Activated CD4-positive, alpha-beta T cell treated with anti-CD3 and anti-CD28 coated beads for 36 hours (primary cell): ENCODE measurements at regions of chr14 and their contacts with region 1.

Region 1: DNA sequence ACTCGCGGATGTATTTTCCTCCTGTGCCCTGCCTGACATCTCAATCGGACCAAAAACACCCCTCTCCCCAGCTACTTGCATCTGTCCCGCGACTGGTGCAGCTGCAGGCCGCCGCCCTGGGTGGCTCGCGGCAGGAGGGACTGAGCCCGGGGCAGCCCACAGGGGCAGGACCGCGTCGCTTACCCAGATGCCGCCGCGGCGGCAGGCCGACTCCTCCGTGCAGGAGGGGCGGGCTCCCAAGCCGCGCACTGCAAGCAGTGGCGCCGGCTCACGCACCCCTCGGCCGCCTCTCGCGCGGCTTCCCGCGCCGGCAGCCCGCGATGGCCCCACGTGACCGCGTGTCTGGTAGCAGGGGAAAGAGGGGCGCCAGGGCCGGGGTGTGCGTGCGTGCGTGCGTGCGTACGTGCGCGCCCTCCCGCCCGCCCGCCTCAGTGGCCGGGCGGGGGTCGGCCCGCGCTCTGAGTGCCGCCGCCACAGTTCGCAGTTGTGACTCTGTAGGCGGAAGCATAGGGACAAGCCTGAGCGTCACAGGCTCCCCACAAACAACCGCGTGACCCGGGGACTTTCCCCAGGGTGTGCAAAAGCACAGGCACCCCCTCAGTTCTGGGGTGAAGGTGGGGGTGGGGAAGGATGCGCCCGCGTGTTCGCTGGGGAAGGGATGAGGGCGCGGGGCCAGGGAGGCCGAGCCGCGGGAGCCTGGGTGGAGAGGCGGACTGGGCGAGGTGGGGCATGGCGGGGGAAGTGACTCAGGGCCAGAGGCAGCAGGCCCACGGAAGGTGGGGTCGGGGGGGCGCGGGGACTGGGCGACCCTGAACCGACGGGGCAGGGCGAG is at the start of gene ZBTB25:
- DNase-seq: peak; percentile 97
- ATAC-seq: peak; percentile 66
- H3K4me3 Mint-ChIP-seq: peak within 1 kb of the TSS; percentile 98
- H3K27ac Mint-ChIP-seq: peak within 1 kb of the TSS; percentile 99
- H3K4me1 Mint-ChIP-seq: peaks cover 51% of the 10 kb centered on the region
- H3K27me3 Mint-ChIP-seq: no peaks in the 10 kb centered on the region
- total RNA-seq, gene ZBTB25: 32.7 to 40.0 TPM

Region 2: DNA sequence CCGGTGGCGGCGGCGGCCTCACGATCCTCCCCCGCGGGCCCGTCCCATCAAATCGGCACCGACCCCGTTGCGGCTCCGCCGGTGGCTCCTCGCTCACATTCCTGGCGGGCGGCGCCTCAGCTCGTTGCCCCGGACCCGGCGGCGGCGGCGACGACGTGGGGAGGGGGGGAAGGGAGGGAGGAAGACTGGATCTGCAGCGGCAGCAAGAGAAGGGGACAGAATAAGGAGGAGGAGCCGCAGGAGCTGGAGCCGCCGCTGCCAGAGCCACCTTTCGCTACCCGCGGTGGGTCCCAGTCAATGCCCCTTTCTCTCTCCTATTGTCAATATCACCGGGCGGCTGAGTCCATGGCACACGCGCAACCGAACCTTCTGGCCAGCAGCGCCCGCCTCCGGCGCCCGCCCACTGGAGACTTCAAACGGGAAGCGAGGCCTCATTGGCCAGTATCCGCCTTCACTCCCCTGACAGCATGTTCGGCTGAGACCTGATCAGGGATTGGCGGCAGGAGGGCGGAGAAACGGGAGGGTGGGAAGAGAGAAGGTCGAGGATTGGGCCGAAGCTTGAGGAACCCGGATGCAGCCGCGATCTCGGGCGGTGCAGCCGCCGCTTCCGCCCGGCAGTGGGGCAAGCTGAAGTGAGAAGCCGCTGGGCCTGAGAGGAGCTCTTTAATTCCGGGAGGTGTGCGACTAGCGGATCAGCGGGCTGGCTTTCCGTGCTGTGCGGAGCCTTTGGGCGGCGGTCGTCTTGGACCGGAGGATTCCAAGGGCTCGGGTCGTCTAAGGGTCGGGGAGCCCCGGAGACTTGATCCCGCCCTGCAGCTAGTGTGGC is 960.5 kb before region 1 on chr14 and contains the start of gene PPP2R5E:
- CTCF ChIA-PET with region 1: no interaction called
- POLR2A ChIA-PET with region 1: no interaction called
- intact Hi-C with region 1: loop called in 1 of 2 experiments (anchors 10 kb)
- DNase-seq: peak; percentile 98
- ATAC-seq: peak; percentile 99
- H3K4me3 Mint-ChIP-seq: peak within 1 kb of the TSS; percentile 86
- H3K27ac Mint-ChIP-seq: peak within 1 kb of the TSS; percentile 85
- H3K4me1 Mint-ChIP-seq: peaks cover 26% of the 10 kb centered on the region
- H3K27me3 Mint-ChIP-seq: no peaks in the 10 kb centered on the region
- total RNA-seq, gene PPP2R5E: 38.4 to 40.4 TPM

Region 3: DNA sequence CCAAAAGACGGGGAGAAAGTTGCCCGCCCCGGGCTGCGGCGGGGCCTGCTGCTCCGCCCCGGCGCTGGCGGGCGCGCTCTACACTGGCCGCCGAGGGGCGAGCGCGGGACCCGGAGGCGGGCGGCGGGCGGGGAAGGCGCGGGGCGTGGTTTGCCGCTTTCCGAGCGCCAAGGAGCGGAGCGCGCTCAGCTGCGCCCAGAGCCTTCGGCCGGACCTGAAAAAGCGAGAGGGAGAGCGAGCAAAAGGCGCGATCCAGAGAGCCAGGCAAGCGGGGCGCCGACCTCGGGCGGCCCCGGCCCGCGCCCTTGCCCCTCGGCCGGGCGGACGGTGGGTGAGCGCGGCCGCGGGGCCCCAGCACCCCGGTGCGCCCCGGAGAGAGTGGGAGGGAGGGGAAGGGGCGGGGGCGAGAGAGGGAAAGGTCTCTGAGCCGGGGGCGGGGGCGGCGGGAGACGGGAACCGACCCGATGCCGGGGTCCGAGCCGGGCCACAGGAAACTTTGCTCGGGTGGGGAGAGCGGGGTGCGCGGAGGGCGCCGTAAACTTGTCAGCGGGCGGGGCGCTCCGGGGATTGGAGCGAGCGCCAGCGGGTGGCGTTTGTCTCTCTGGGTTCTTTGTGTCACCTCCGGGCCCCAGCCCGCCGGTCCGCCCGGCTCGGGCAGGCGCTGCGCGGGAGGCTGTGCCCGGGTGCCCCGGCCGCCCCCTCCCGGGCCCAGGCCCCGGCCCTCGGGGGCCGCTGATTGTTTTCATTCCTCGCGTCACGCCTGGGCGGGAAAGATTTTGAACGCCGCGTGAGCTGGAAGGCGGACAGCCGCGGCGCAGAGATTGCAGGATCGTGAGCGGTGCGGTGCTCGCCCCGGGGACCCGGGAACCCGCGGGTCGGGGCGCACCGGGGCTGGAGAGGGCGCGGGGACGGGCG is 650.6 kb before region 1 on chr14 and contains the start of gene SYNE2:
- CTCF ChIA-PET with region 1: no interaction called
- POLR2A ChIA-PET with region 1: no interaction called
- intact Hi-C with region 1: loop called in 1 of 2 experiments (anchors 5 kb)
- DNase-seq: peak; percentile 89
- ATAC-seq: peak; percentile 86
- H3K4me3 Mint-ChIP-seq: peak within 1 kb of the TSS; percentile 95
- H3K27ac Mint-ChIP-seq: peak within 1 kb of the TSS; percentile 85
- H3K4me1 Mint-ChIP-seq: peaks cover 35% of the 10 kb centered on the region
- H3K27me3 Mint-ChIP-seq: no peaks in the 10 kb centered on the region
- total RNA-seq, gene SYNE2: 18.4 to 21.8 TPM

Region 4: GRCh38 chr14:64387694-64388532 is 115.8 kb before region 1 on chr14 and contains the start of gene MTHFD1:
- CTCF ChIA-PET with region 1: no interaction called
- POLR2A ChIA-PET with region 1: interaction called, 5 read pairs
- intact Hi-C with region 1: loop called (anchors 1 kb)
- DNase-seq: peak; percentile 99
- ATAC-seq: peak; percentile 95
- H3K4me3 Mint-ChIP-seq: peak within 1 kb of the TSS; percentile 93
- H3K27ac Mint-ChIP-seq: peak within 1 kb of the TSS; percentile 93
- H3K4me1 Mint-ChIP-seq: peaks cover 34% of the 10 kb centered on the region
- H3K27me3 Mint-ChIP-seq: no peaks in the 10 kb centered on the region
- total RNA-seq, gene MTHFD1: 213 to 222 TPM

Region 5: DNA sequence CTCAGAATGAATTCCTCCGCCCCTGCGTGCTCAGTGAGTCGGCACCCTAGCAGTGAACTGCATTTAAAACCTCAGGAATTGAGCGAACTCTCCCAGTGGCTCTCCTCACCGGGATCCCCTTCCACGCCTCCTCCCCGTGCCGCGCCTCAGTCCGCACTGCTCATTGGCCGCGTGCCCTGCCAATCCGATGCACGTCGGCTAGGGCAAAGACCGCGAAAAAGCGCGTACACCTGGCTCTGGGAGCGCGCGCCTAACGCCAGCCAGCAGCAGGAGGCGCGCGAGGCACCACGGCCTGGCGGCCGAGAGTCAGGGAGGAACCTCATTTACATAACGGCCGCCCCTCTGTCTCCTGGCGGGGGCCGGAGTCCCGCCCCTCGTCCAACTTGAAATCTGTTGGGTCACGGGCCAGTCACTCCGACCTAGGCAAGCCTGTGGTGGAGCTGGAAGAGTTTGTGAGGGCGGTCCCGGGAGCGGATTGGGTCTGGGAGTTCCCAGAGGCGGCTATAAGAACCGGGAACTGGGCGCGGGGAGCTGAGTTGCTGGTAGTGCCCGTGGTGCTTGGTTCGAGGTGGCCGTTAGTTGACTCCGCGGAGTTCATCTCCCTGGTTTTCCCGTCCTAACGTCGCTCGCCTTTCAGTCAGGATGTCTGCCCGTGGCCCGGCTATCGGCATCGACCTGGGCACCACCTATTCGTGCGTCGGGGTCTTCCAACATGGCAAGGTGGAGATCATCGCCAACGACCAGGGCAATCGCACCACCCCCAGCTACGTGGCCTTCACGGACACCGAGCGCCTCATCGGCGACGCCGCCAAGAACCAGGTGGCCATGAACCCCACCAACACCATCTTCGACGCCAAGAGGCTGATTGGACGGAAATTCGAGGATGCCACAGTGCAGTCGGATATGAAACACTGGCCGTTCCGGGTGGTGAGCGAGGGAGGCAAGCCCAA is 36.8 kb after region 1 on chr14 and contains the start of gene HSPA2:
- CTCF ChIA-PET with region 1: interaction called, 8 read pairs
- POLR2A ChIA-PET with region 1: interaction called, 4 read pairs
- intact Hi-C with region 1: loop called (anchors 1 kb)
- DNase-seq: peak; percentile 97
- ATAC-seq: peak; percentile 95
- H3K4me3 Mint-ChIP-seq: peak within 1 kb of the TSS; percentile 81
- H3K27ac Mint-ChIP-seq: peak within 1 kb of the TSS; percentile 96
- H3K4me1 Mint-ChIP-seq: peaks cover 28% of the 10 kb centered on the region
- H3K27me3 Mint-ChIP-seq: peaks cover 39% of the 10 kb centered on the region
- total RNA-seq, gene HSPA2: 3.2 to 4.1 TPM

Region 6: GRCh38 chr14:64681796-64682710 is 178.4 kb after region 1 on chr14:
- CTCF ChIA-PET with region 1: no interaction called
- POLR2A ChIA-PET with region 1: no interaction called
- intact Hi-C with region 1: no loop called
- DNase-seq: no peak
- ATAC-seq: no peak
- H3K4me3 Mint-ChIP-seq: no peak overlapping the region
- H3K27ac Mint-ChIP-seq: no peak overlapping the region
- H3K4me1 Mint-ChIP-seq: no peaks in the 10 kb centered on the region
- H3K27me3 Mint-ChIP-seq: no peaks in the 10 kb centered on the region

Region 7: DNA sequence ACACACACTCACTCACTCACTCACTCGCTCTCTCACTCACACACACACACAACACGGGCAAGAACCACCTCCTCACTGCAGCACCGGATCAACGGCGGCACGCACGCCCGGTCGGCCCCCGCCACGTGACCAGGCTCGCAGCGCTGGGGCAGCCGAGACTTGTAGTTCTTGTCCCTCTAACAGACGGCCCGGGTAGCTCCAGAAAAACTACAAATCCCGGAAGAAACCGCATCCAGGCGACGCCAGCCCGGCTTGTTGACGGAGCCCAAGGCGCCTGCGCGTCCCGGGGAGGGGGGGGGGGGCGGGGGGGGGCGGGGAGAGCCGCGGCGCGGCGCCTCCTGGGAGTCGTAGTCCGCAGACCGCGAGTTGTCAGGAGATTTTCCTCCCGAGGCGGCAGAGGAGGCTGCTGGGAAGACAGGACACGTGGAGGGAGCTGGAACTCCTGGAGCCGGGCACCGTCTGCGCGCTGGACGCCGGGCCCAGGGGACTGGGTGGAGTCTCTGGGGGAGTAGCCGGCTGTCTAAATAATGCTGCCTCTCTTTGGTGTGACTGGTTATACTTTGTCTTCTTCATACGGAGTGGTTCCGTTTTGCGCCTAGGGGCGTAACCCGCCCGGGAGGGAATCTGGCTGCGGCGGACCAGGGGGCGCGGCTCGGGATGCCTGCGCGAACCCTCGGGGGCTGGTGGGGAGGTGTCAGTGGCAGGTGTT is 598.9 kb after region 1 on chr14 and contains the start of gene MAX:
- CTCF ChIA-PET with region 1: no interaction called
- POLR2A ChIA-PET with region 1: no interaction called
- intact Hi-C with region 1: loop called in 1 of 2 experiments (anchors 2 kb)
- DNase-seq: peak; percentile 99
- ATAC-seq: peak; percentile 95
- H3K4me3 Mint-ChIP-seq: peak within 1 kb of the TSS; percentile 89
- H3K27ac Mint-ChIP-seq: peak within 1 kb of the TSS; percentile 96
- H3K4me1 Mint-ChIP-seq: peaks cover 40% of the 10 kb centered on the region
- H3K27me3 Mint-ChIP-seq: peaks cover 2% of the 10 kb centered on the region
- total RNA-seq, gene MAX: 93.6 to 136 TPM